ENCODE measurements at regions of chr9 and their contacts with region 1.

Region 1: DNA sequence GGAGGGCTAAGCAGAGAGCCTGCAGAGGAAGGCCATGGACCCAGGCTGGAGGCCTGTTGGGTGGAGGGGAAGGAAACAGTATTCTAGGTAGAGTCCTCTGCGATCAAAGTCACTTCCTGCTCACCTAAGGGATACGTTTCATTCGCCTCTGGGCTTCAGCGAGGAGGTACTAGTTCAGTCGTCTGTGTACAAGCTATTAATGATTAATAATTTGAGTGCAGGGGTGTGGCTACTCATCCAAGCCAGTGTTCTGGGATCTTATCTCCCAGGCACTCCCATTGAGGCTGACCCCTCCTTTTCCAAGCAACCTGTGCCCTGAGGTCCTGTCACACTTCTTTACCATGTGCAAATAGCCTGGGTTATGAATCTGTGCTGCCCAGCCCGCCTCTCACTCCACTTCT is 25.2 kb downstream of the RALGPS1 start:
- DNase-seq: no peak
- H3K4me3 ChIP-seq: no peak overlapping the region
- H3K27ac ChIP-seq: no peak overlapping the region
- H3K4me1 ChIP-seq: peaks cover 0 to 4% (median 3%) of the 10 kb centered on the region in 4 experiments; a peak in 4 of 7 replicates
- H3K27me3 ChIP-seq: no peaks in the 10 kb centered on the region
- CTCF ChIP-seq: no peak
- EP300 ChIP-seq: no peak
- POLR2A ChIP-seq: no peak
- RAD21 ChIP-seq: no peak

Region 2: GRCh38 chr9:126806336-126806735 is 133.5 kb before region 1 on chr9:
- CTCF ChIA-PET with region 1: no interaction called
- POLR2A ChIA-PET with region 1: no interaction called
- DNase-seq: no peak
- H3K4me3 ChIP-seq: peak overlapping the region in 1 of 4 experiments; percentile 80; a peak in 2 of 8 replicates
- H3K27ac ChIP-seq: no peak overlapping the region
- H3K4me1 ChIP-seq: peaks cover 0 to 7% (median 5%) of the 10 kb centered on the region in 4 experiments; a peak in 6 of 7 replicates
- H3K27me3 ChIP-seq: peaks cover 0 to 2% (median 0%) of the 10 kb centered on the region in 4 experiments; a peak in 1 of 7 replicates
- CTCF ChIP-seq: no peak
- EP300 ChIP-seq: no peak
- POLR2A ChIP-seq: no peak
- RAD21 ChIP-seq: no peak

Region 3: GRCh38 chr9:126927419-126927818 is 12.4 kb before region 1 on chr9:
- CTCF ChIA-PET with region 1: interaction called, 17 read pairs
- POLR2A ChIA-PET with region 1: interaction called, 4 read pairs
- DNase-seq: no peak
- H3K4me3 ChIP-seq: no peak overlapping the region
- H3K27ac ChIP-seq: no peak overlapping the region
- H3K4me1 ChIP-seq: no peaks in the 10 kb centered on the region; a peak in 1 of 7 replicates
- H3K27me3 ChIP-seq: peaks cover 0 to 6% (median 0%) of the 10 kb centered on the region in 4 experiments; a peak in 2 of 7 replicates
- CTCF ChIP-seq: no peak
- EP300 ChIP-seq: no peak
- POLR2A ChIP-seq: no peak
- RAD21 ChIP-seq: no peak

Region 4: GRCh38 chr9:127030814-127031740 is 91.3 kb after region 1 on chr9:
- CTCF ChIA-PET with region 1: no interaction called
- POLR2A ChIA-PET with region 1: no interaction called
- DNase-seq: no peak
- H3K4me3 ChIP-seq: no peak overlapping the region
- H3K27ac ChIP-seq: no peak overlapping the region
- H3K4me1 ChIP-seq: peaks cover 0 to 4% (median 2%) of the 10 kb centered on the region in 4 experiments; a peak in 2 of 7 replicates
- H3K27me3 ChIP-seq: no peaks in the 10 kb centered on the region
- CTCF ChIP-seq: no peak
- EP300 ChIP-seq: no peak
- POLR2A ChIP-seq: no peak
- RAD21 ChIP-seq: no peak

Region 5: GRCh38 chr9:127159325-127159801 is 219.5 kb after region 1 on chr9:
- CTCF ChIA-PET with region 1: interaction called, 15 read pairs
- POLR2A ChIA-PET with region 1: no interaction called
- DNase-seq: peak; percentile 17 to 66
- H3K4me3 ChIP-seq: no peak overlapping the region
- H3K27ac ChIP-seq: no peak overlapping the region
- H3K4me1 ChIP-seq: peaks cover 3 to 9% (median 6%) of the 10 kb centered on the region in 4 experiments
- H3K27me3 ChIP-seq: no peaks in the 10 kb centered on the region
- CTCF ChIP-seq: peak; percentile 50 to 66 (median 65)
- EP300 ChIP-seq: no peak
- POLR2A ChIP-seq: no peak
- RAD21 ChIP-seq: peak; percentile 60 to 66

Region 6: DNA sequence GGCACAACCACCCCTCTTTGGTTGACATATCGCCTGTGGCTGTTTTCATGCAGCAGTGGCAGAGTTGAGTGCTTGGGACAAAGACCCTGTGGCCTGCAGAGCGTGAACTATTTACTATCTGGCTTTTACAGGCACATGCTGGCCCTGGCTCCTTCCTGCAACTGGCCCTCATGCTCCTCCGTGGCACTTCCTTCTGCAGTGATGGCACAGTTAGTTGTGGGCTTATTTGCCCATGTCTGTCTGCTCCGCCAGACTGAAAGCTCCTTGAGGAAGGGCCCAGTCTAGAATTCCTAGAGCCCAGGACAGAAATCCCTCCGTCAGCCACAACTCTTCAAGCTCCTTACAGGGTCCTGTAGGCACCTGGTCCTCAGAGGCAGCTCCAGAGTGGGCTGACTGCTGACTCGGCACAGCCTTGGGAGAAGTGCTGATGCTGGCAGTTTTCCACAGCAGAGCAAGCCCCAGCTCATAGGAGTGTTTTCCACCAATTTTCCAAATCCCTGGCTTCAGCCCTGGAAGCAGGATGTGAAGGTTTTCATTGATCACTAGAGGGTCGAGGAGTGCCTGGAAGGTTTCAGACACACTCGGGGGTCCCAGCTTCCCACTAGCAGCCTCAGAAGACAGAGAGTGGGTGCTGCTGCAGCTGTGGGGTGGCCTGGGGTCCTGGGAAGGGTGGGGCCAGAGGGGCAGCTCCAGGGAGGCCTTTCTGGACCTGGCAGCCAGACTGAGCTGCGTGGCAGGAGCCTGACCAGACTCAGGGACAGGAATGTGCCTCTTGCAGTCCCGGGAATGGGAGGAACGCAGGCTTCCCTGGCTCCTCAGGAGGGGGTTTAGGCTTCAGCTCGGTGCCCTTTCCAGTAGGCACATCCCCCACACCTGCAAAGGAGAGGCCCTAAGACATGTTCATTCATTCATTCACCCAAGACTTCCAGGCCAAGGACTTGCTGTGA is 239.1 kb after region 1 on chr9:
- CTCF ChIA-PET with region 1: interaction called, 10 read pairs
- POLR2A ChIA-PET with region 1: no interaction called
- DNase-seq: no peak
- H3K4me3 ChIP-seq: no peak overlapping the region
- H3K27ac ChIP-seq: 0 out of 2 replicates have a peak overlapping the region, but pooled peaks have one; percentile 38
- H3K4me1 ChIP-seq: peaks cover 0 to 6% (median under 1%) of the 10 kb centered on the region in 4 experiments; a peak in 4 of 7 replicates
- H3K27me3 ChIP-seq: no peaks in the 10 kb centered on the region
- CTCF ChIP-seq: no peak
- EP300 ChIP-seq: no peak
- POLR2A ChIP-seq: no peak
- RAD21 ChIP-seq: no peak

Region 7: GRCh38 chr9:127214421-127215267 is 274.8 kb after region 1 on chr9:
- CTCF ChIA-PET with region 1: interaction called, 45 read pairs
- POLR2A ChIA-PET with region 1: no interaction called
- DNase-seq: peak in 1 of 2 experiments; percentile 75
- H3K4me3 ChIP-seq: no peak overlapping the region
- H3K27ac ChIP-seq: no peak overlapping the region
- H3K4me1 ChIP-seq: peaks cover 2 to 14% (median 9%) of the 10 kb centered on the region in 4 experiments
- H3K27me3 ChIP-seq: no peaks in the 10 kb centered on the region
- CTCF ChIP-seq: peak; percentile 79 to 88 (median 87)
- EP300 ChIP-seq: no peak
- POLR2A ChIP-seq: no peak
- RAD21 ChIP-seq: peak; percentile 82 to 88

Measured in H1 (cell line).